ENCODE measurements at regions of chr16 and their contacts with region 1.

Region 1: DNA sequence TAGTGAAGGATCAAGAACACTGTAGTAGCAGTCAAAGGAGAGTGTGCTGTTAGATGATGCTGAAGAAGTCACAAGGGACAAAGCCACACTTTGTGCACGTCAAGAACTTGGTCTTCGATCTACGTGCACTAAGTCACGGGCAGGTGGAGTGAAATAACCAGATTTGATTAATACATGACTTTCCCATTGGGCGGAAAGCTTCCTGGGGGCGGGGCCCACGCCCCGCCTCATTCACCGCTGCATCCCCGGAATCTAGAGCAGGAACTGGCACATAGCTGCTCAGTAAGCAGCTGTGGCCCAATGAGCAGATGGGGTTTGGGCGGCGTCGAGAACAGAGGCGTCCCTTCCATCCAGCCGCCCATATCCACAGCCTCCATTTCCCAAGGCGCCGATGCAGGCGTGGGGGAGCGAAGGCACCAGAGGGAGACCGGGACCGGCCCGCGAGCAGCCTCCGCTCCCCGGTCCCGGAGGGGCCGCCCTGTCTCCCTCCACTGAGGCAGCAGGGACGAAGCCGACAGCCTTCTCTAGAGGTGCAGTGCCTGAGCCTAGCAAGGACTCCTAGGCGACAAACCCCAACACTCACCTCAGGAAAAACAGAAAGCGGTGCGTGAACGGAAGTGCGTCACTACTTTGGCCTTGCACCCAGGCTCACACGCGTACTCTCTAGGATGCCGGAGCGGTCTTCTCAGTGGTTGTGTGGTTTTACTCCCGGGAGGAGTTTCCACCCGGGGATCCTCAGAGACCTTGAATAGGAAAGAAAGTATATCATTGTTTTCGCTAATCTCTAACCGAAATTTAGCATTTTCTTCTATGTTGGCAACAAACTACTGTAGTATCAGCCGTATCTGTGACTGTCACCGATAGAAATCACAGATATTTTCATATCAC is 4.9 kb downstream of the ZNF19 start:
- DNase-seq: peak; percentile 85 to 97 (median 92)

Region 2: GRCh38 chr16:70380861-70381603 is 1103.2 kb before region 1 on chr16:
- intact Hi-C with region 1: no loop called
- DNase-seq: peak; percentile 94 to 99 (median 97)

Region 3: DNA sequence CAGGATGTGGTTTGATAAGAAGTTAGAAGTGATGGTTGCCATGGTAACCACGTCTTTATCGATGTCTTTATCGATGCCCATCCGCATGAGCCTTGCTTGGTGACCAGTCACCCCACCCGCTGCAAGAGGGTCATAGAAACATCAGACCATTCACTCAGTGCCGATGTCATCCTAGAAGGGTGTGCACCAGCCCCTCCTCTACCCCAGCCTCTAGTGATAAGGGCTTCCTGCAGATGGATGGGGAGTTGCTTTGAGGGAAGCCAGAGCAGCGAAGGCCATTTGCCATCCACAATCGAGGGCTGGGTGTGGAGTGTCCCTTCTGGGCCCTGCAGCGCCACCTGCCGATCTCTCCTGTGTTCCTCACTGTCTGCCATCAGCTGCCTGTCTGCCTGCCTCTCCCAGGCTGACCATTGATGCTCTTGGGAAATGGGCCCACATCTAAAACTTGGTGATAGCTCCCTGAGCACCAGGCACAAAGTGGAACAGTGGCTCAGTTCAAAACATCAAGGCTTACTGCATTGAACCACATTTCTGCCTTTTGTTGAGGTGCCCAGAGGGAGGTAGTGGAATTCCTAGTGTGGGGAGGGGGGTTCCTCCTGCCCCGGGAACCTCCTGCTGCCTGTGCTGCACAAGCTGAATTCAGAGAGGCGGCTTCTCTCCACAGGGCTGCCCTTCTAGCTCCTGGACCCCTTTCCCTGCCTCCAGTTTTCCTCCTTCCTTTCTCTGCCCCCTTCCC is 116.8 kb before region 1 on chr16:
- intact Hi-C with region 1: no loop called
- DNase-seq: peak in 30 of 42 donors; percentile 3 to 63 (median 38)

Region 4: DNA sequence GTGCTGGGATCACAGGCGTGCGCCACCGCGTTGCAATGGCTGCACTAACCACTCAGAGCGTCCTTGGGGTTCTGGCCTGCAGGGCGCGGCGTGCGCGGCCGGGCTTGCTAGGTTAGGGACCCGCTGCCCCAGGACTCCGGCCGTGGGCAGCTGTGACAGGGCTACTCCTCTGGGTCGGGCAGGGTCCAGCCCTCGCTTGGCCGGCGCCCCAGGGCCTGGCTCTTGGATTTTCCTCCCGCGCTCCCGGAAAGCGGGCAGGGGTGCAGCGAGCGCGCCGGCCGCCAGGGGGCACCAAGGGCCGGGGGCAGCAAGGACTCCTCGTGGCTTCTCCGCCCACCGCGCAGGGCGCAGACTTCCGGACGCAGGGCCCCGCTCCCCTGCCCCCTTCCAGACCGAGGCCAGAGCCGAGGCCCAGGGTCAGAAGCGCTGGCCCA is 42.9 kb before region 1 on chr16:
- intact Hi-C with region 1: no loop called
- DNase-seq: no peak

Region 5: GRCh38 chr16:71461686-71462648 is 22.3 kb before region 1 on chr16 and contains the start of gene ZNF23:
- intact Hi-C with region 1: loop called (anchors 1 kb)
- DNase-seq: peak; percentile 65 to 96 (median 92)

Region 6: GRCh38 chr16:71564155-71564967 is 80.1 kb after region 1 on chr16:
- intact Hi-C with region 1: loop called (anchors 10 kb)
- DNase-seq: peak in 6 of 42 donors; percentile 15 to 95 (median 89)